ENCODE measurements at regions of chr5 and their contacts with region 1.

Region 1: DNA sequence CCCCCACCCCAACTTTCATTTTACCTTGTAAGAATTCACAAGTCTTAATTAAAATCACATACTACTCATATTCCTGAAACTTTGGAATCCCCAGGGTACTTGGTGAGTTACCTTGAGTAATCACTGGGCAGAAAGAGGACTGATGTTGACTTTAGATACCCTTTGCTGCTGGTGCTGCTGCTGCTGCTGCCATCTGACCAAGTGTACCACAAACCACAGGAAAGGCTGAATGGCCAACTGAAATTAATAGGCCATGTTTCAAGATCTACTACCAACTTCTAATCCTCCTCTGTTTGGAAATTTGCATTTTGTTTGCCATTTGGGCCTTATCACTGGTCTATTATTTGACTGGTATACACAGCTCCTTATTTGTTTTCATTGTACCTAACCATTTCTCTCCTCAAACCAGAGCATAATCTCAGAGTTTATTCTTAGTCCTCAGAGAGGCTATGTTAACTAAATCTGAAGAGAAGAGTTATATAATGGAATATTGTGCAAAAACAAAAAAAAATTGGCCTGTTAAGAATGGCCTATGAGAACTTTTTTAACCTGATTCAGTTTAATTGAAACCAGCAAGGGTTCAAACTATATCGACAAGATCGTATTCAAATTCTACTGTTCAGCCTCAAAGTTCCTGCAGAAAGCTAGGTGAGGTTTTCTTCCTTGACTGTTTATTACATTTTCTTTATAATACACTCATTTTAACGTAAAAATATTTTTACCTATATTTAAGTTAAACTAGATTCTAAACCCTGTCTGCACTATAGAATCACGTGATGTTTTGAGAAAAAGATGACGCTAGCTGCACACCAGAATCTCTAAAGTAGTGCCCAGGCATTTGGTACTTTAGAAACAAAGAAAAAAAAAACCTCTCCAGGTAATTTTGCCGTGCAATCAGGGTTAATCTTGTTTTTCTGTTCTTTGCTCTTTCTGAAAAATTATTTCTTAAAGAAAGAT is 13.1 kb downstream of the SELENOP start:
- DNase-seq: no peak
- ATAC-seq: no peak
- H3K4me3 ChIP-seq: no peak overlapping the region
- H3K4me3 Mint-ChIP-seq: no peak overlapping the region
- H3K27ac ChIP-seq: no peak overlapping the region
- H3K27ac Mint-ChIP-seq: no peak overlapping the region
- H3K4me1 ChIP-seq: no peaks in the 10 kb centered on the region
- H3K4me1 Mint-ChIP-seq: no peaks in the 10 kb centered on the region
- H3K27me3 ChIP-seq: no peaks in the 10 kb centered on the region
- H3K27me3 Mint-ChIP-seq: no peaks in the 10 kb centered on the region
- CTCF ChIP-seq: no peak

Region 2: DNA sequence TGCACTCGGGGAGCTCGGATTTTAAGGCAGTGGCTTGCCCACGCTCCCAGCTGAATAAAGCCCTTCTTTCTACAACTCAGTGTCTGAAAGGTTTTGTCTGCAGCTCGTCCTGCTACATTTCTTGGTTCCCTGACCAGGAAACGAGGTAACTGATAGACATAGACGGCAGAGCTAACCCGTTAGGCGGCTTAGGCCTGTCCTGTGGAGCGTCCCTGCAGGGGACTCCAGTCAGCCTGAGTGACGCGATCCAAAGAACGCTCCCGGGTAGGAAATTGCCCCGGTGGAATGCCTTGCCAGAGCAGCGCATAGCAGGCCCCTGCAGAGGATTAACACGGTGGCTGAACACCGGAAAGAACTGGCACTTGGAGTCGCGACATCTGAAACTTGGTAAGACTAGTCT is 15.0 kb after region 1 on chr5:
- CTCF ChIA-PET with region 1: no interaction called
- POLR2A ChIA-PET with region 1: no interaction called
- intact Hi-C with region 1: loop called in 1 of 2 experiments (anchors 1 kb)
- DNase-seq: no peak
- ATAC-seq: no peak
- H3K4me3 ChIP-seq: no peak overlapping the region
- H3K4me3 Mint-ChIP-seq: no peak overlapping the region
- H3K27ac ChIP-seq: no peak overlapping the region
- H3K27ac Mint-ChIP-seq: no peak overlapping the region
- H3K4me1 ChIP-seq: no peaks in the 10 kb centered on the region
- H3K4me1 Mint-ChIP-seq: no peaks in the 10 kb centered on the region
- H3K27me3 ChIP-seq: no peaks in the 10 kb centered on the region
- H3K27me3 Mint-ChIP-seq: no peaks in the 10 kb centered on the region
- CTCF ChIP-seq: no peak

Region 3: GRCh38 chr5:43215073-43215631 is 416.6 kb after region 1 on chr5:
- CTCF ChIA-PET with region 1: no interaction called
- POLR2A ChIA-PET with region 1: no interaction called
- intact Hi-C with region 1: no loop called
- DNase-seq: peak in 1 of 14 experiments; percentile 8
- ATAC-seq: no peak
- H3K4me3 ChIP-seq: no peak overlapping the region
- H3K4me3 Mint-ChIP-seq: no peak overlapping the region
- H3K27ac ChIP-seq: no peak overlapping the region
- H3K27ac Mint-ChIP-seq: no peak overlapping the region
- H3K4me1 ChIP-seq: no peaks in the 10 kb centered on the region
- H3K4me1 Mint-ChIP-seq: no peaks in the 10 kb centered on the region
- H3K27me3 ChIP-seq: no peaks in the 10 kb centered on the region
- H3K27me3 Mint-ChIP-seq: peaks cover 12% of the 10 kb centered on the region
- CTCF ChIP-seq: no peak